Activated T-helper 2 cell treated with anti-CD3 and anti-CD28 coated beads, Interferon-gamma antibody, Interleukin-2, Interleukin-4, amounts not matched to agents 10 μg/mL and 5 μg/mL and 100 μg/mL, durations not matched to agents 14 hours and 24 hours and 36 hours (primary cell): ENCODE measurements at regions of chr1 and their contacts with region 1.

Region 1: GRCh38 chr1:236868625-236869467 is 73.8 kb downstream of the MTR start:
- DNase-seq: peak; percentile 18
- H3K4me3 Mint-ChIP-seq: no peak overlapping the region
- H3K27ac Mint-ChIP-seq: no peak overlapping the region
- H3K4me1 Mint-ChIP-seq: peaks cover 17% of the 10 kb centered on the region
- H3K27me3 Mint-ChIP-seq: no peaks in the 10 kb centered on the region

Region 2: GRCh38 chr1:236759252-236759859 is 109.5 kb before region 1 on chr1:
- intact Hi-C with region 1: loop called (anchors 1 kb)
- DNase-seq: no peak
- H3K4me3 Mint-ChIP-seq: no peak overlapping the region
- H3K27ac Mint-ChIP-seq: no peak overlapping the region
- H3K4me1 Mint-ChIP-seq: peaks cover 5% of the 10 kb centered on the region
- H3K27me3 Mint-ChIP-seq: no peaks in the 10 kb centered on the region